Activated CD4-positive, alpha-beta T cell treated with anti-CD3 and anti-CD28 coated beads, Interleukin-2, amount 10 ng/mL, durations not matched to agents 24 days and 14 days (primary cell): ENCODE measurements at regions of chr5 and their contacts with region 1.

Region 1: DNA sequence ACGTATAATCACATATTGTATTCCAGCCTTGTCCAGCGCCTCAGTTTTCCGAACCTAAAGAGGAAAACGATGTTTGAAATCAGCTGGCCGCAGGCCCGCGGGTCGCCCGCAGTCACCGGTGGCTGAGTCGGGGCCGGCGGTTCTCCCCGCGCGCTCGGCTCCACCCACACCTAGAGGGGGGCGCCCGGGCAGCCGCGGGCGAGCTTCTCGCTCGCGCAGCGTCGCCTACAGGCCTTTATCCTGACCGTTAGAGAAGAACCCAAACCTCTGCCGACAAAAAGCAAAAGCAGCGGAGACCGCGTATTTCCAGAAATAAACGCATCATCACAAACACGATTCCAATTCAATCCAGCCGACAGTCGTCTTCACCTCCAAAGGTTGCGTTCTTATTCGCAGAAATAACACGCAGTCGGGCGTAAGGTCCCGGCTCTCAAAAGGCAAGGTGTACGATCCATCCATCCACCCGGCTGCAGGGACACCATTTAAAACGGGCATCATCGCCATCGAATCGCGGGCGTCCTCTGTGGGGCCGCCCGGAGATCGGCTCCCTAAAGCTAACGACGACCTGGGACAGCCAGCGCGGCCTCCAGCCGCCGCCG is 680 bp upstream of the NIPBL start:
- DNase-seq: peak; percentile 93
- H3K4me3 Mint-ChIP-seq: peak overlapping the region; percentile 88
- H3K27ac Mint-ChIP-seq: peak overlapping the region; percentile 91
- H3K4me1 Mint-ChIP-seq: peaks cover 28% of the 10 kb centered on the region
- H3K27me3 Mint-ChIP-seq: no peaks in the 10 kb centered on the region

Region 2: GRCh38 chr5:36151434-36152323 is 724.2 kb before region 1 on chr5 and contains the starts of genes LMBRD2 and SKP2:
- intact Hi-C with region 1: loop called (anchors 5 kb)
- DNase-seq: peak; percentile 99
- H3K4me3 Mint-ChIP-seq: peak within 1 kb of the TSS; percentile 85
- H3K27ac Mint-ChIP-seq: peak within 1 kb of the TSS; percentile 90
- H3K4me1 Mint-ChIP-seq: peaks cover 36% of the 10 kb centered on the region
- H3K27me3 Mint-ChIP-seq: no peaks in the 10 kb centered on the region
- total RNA-seq, gene LMBRD2: 9.8 TPM in 2 replicates
- total RNA-seq, gene SKP2: 63.0 and 69.8 TPM in 2 replicates

Region 3: GRCh38 chr5:36820900-36821299 is 55.0 kb before region 1 on chr5:
- intact Hi-C with region 1: no loop called
- DNase-seq: no peak
- H3K4me3 Mint-ChIP-seq: no peak overlapping the region
- H3K27ac Mint-ChIP-seq: no peak overlapping the region
- H3K4me1 Mint-ChIP-seq: no peaks in the 10 kb centered on the region
- H3K27me3 Mint-ChIP-seq: peaks cover 33% of the 10 kb centered on the region

Region 4: GRCh38 chr5:36889264-36889663 is 13.4 kb after region 1 on chr5:
- intact Hi-C with region 1: loop called (anchors 1 kb)
- DNase-seq: no peak
- H3K4me3 Mint-ChIP-seq: no peak overlapping the region
- H3K27ac Mint-ChIP-seq: peak overlapping the region; percentile 66
- H3K4me1 Mint-ChIP-seq: peaks cover 31% of the 10 kb centered on the region
- H3K27me3 Mint-ChIP-seq: no peaks in the 10 kb centered on the region

Region 5: DNA sequence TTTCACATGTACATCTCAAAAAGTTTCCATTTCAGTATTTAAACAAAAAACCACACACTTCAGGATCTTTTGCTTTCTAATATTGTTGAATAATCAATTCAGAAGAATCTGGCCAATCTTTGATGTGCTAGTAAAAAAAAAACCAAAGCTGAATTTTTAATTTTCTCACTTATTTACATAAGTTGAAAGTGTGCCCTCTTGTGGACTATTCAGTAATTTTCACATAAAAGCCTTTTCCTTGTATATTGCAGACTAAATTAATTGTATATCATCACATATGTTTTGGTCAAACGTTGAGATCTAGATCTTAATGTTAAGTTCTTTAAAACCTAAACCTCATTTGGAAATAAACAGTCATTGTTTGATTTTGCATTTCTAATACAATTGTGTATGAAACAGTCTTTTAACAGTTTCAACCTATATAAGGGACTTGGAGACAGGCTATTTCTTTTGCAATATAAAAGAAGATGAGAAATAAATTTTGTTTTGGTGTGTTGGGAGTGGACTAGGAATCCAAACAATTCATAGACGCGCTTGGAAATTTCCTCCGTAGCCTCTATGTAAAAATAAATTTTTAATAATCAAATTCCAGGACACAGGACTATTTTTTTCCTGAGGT is 68.8 kb after region 1 on chr5:
- intact Hi-C with region 1: loop called (anchors 1 kb)
- DNase-seq: no peak
- H3K4me3 Mint-ChIP-seq: no peak overlapping the region
- H3K27ac Mint-ChIP-seq: no peak overlapping the region
- H3K4me1 Mint-ChIP-seq: peaks cover 7% of the 10 kb centered on the region
- H3K27me3 Mint-ChIP-seq: no peaks in the 10 kb centered on the region

Region 6: DNA sequence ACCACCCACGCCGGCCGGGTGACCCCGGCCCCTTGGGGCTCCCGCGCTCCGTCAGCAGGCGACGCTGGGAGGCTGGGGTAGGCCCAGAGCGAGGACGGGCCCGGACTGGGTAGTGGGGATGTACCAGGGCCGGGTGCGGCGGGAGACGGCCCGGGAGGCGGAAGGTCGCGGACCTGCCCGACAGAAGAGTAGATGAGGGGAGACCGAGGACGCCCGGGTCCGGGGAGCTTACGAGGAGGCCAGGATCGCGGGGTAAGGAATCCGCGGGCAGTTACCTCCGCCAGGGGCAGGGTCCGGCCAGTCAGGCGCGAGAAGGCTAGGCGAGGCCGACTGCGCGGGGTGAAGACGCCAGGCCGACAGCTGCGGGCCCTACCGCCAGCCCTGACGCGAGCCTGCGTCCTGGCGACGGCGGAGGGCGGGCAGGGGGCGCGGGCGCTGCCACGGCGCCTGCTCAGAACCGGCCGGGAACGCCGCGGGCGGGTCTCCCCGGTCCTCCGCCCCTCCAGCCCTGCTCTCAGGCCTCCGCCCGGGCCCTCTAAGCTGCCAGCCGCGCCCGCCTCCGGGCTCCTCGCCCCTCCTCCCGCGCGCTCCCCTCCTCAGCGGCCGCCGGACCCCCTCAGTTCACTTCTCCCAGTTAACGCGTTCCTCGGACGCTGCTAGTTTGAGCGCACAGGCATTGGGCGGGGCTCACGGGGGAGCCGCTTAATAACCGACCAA is 373.2 kb after region 1 on chr5 and contains the start of gene CPLANE1:
- intact Hi-C with region 1: loop called (anchors 2 kb)
- DNase-seq: peak; percentile 89
- H3K4me3 Mint-ChIP-seq: peak within 1 kb of the TSS; percentile 88
- H3K27ac Mint-ChIP-seq: peak within 1 kb of the TSS; percentile 75
- H3K4me1 Mint-ChIP-seq: peaks cover 10% of the 10 kb centered on the region
- H3K27me3 Mint-ChIP-seq: no peaks in the 10 kb centered on the region
- total RNA-seq, gene CPLANE1: 7.6 and 7.8 TPM in 2 replicates